ENCODE measurements at regions of chrX and their contacts with region 1.

Region 1: GRCh38 chrX:55008471-55009358 is 8.6 kb downstream of the APEX2 start:
- DNase-seq: peak in 4 of 14 experiments; percentile 3 to 19 (median 11)
- ATAC-seq: peak; percentile 58
- H3K4me3 ChIP-seq: no peak overlapping the region
- H3K4me3 Mint-ChIP-seq: no peak overlapping the region
- H3K27ac ChIP-seq: no peak overlapping the region
- H3K27ac Mint-ChIP-seq: peak overlapping the region; percentile 50
- H3K4me1 ChIP-seq: peaks cover 7% of the 10 kb centered on the region
- H3K4me1 Mint-ChIP-seq: peaks cover 30% of the 10 kb centered on the region
- H3K27me3 ChIP-seq: no peaks in the 10 kb centered on the region
- H3K27me3 Mint-ChIP-seq: no peaks in the 10 kb centered on the region
- CTCF ChIP-seq: no peak

Region 2: DNA sequence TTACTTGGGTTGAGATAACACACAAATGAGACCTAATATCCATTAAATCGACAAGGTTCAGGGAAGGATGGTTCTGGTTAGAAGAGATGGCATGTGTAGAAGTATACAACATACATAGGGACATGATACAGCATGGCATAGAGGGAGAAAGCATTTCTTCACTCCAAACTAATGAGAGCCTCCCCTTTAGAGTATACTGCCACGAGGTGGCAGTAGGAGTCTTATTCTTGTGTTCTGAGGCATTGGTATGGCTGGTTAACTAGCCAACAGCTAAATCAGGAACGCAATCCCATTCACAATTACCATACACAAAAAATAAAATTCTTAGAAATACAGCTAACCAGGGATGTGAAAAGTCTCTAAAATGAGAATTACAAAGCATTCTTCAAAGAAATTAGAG is 117.1 kb before region 1 on chrX:
- CTCF ChIA-PET with region 1: interaction called, 4 read pairs
- POLR2A ChIA-PET with region 1: no interaction called
- intact Hi-C with region 1: loop called in 1 of 2 experiments (anchors 5 kb)
- DNase-seq: peak in 11 of 14 experiments; percentile 6 to 68 (median 31)
- ATAC-seq: peak; percentile 84
- H3K4me3 ChIP-seq: no peak overlapping the region
- H3K4me3 Mint-ChIP-seq: no peak overlapping the region
- H3K27ac ChIP-seq: no peak overlapping the region
- H3K27ac Mint-ChIP-seq: no peak overlapping the region
- H3K4me1 ChIP-seq: no peaks in the 10 kb centered on the region
- H3K4me1 Mint-ChIP-seq: peaks cover 4% of the 10 kb centered on the region
- H3K27me3 ChIP-seq: peaks cover 0 to 3% of the 10 kb centered on the region in 2 experiments
- H3K27me3 Mint-ChIP-seq: no peaks in the 10 kb centered on the region
- CTCF ChIP-seq: peak; percentile 57

Region 3: GRCh38 chrX:54950730-54951375 is 57.9 kb before region 1 on chrX:
- CTCF ChIA-PET with region 1: no interaction called
- POLR2A ChIA-PET with region 1: no interaction called
- intact Hi-C with region 1: no loop called
- DNase-seq: no peak
- ATAC-seq: no peak
- H3K4me3 ChIP-seq: no peak overlapping the region
- H3K4me3 Mint-ChIP-seq: no peak overlapping the region
- H3K27ac ChIP-seq: no peak overlapping the region
- H3K27ac Mint-ChIP-seq: no peak overlapping the region
- H3K4me1 ChIP-seq: no peaks in the 10 kb centered on the region
- H3K4me1 Mint-ChIP-seq: no peaks in the 10 kb centered on the region
- H3K27me3 ChIP-seq: no peaks in the 10 kb centered on the region
- H3K27me3 Mint-ChIP-seq: no peaks in the 10 kb centered on the region
- CTCF ChIP-seq: no peak

Region 4: GRCh38 chrX:54992911-54993622 is 15.6 kb before region 1 on chrX:
- CTCF ChIA-PET with region 1: no interaction called
- POLR2A ChIA-PET with region 1: no interaction called
- intact Hi-C with region 1: no loop called
- DNase-seq: no peak
- ATAC-seq: no peak
- H3K4me3 ChIP-seq: no peak overlapping the region
- H3K4me3 Mint-ChIP-seq: no peak overlapping the region
- H3K27ac ChIP-seq: no peak overlapping the region
- H3K27ac Mint-ChIP-seq: no peak overlapping the region
- H3K4me1 ChIP-seq: no peaks in the 10 kb centered on the region
- H3K4me1 Mint-ChIP-seq: no peaks in the 10 kb centered on the region
- H3K27me3 ChIP-seq: no peaks in the 10 kb centered on the region
- H3K27me3 Mint-ChIP-seq: no peaks in the 10 kb centered on the region
- CTCF ChIP-seq: no peak

Region 5: GRCh38 chrX:55088795-55089489 is 80.2 kb after region 1 on chrX and contains the start of gene PAGE2:
- CTCF ChIA-PET with region 1: no interaction called
- POLR2A ChIA-PET with region 1: no interaction called
- intact Hi-C with region 1: no loop called
- DNase-seq: no peak
- ATAC-seq: no peak
- H3K4me3 ChIP-seq: no peak within 1 kb of the TSS
- H3K4me3 Mint-ChIP-seq: no peak within 1 kb of the TSS
- H3K27ac ChIP-seq: no peak within 1 kb of the TSS
- H3K27ac Mint-ChIP-seq: no peak within 1 kb of the TSS
- H3K4me1 ChIP-seq: no peaks in the 10 kb centered on the region
- H3K4me1 Mint-ChIP-seq: no peaks in the 10 kb centered on the region
- H3K27me3 ChIP-seq: no peaks in the 10 kb centered on the region
- H3K27me3 Mint-ChIP-seq: no peaks in the 10 kb centered on the region
- CTCF ChIP-seq: no peak
- total RNA-seq, gene PAGE2: not detected

Region 6: GRCh38 chrX:55187281-55187680 is 178.6 kb after region 1 on chrX:
- CTCF ChIA-PET with region 1: no interaction called
- POLR2A ChIA-PET with region 1: no interaction called
- intact Hi-C with region 1: no loop called
- DNase-seq: no peak
- ATAC-seq: no peak
- H3K4me3 ChIP-seq: no peak overlapping the region
- H3K4me3 Mint-ChIP-seq: no peak overlapping the region
- H3K27ac ChIP-seq: no peak overlapping the region
- H3K27ac Mint-ChIP-seq: no peak overlapping the region
- H3K4me1 ChIP-seq: no peaks in the 10 kb centered on the region
- H3K4me1 Mint-ChIP-seq: no peaks in the 10 kb centered on the region
- H3K27me3 ChIP-seq: no peaks in the 10 kb centered on the region
- H3K27me3 Mint-ChIP-seq: peaks cover 4% of the 10 kb centered on the region
- CTCF ChIP-seq: no peak

Measured in CD4-positive, alpha-beta T cell (primary cell).